ENCODE measurements at regions of chr19 and their contacts with region 1.

Region 1: DNA sequence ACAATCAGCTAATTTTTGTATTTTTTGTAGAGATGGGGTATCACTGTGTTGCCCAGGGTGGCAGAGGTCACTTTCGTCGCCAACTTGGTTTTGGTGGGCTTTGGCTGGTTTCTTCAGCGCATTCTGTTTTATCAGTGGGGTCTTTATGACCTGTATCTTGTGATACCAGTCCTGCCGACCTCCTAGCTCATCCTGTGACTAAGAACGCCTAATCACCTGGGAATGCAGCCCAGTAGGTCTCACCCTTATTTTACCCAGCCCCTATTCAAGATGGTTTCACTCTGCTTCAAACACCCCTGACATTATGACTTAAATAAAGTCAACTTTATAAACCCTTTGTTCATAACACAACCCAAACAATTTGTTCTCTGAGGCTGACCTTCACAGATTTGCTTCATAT is 3.0 kb upstream of the ZNF878 start:
- DNase-seq: no peak
- H3K4me3 Mint-ChIP-seq: no peak overlapping the region
- H3K27ac Mint-ChIP-seq: no peak overlapping the region
- H3K4me1 Mint-ChIP-seq: peaks cover 5% of the 10 kb centered on the region
- H3K27me3 Mint-ChIP-seq: peaks cover 3% of the 10 kb centered on the region

Region 2: GRCh38 chr19:11881151-11881800 is 174.5 kb before region 1 on chr19:
- intact Hi-C with region 1: loop called (anchors 5 kb)
- DNase-seq: peak; percentile 43
- H3K4me3 Mint-ChIP-seq: no peak overlapping the region
- H3K27ac Mint-ChIP-seq: no peak overlapping the region
- H3K4me1 Mint-ChIP-seq: peaks cover 4% of the 10 kb centered on the region
- H3K27me3 Mint-ChIP-seq: no peaks in the 10 kb centered on the region

Measured in activated T-helper 1 cell treated with anti-CD3 and anti-CD28 coated beads, Interleukin-12 subunit alpha, Interleukin-12 subunit beta, Interleukin-2, Interleukin-4 antibody, amounts not matched to agents 30 ng/mL and 10 ng/mL and 1 ng/mL, durations not matched to agents 14 hours and 24 hours and 36 hours (primary cell).